A673 (cell line): ENCODE measurements at regions of chr4 and their contacts with region 1.

Region 1: GRCh38 chr4:73653695-73654106 is 33.5 kb upstream of the RASSF6 start:
- DNase-seq: peak; percentile 18
- H3K4me3 ChIP-seq: no peak overlapping the region
- H3K27ac ChIP-seq: no peak overlapping the region
- H3K4me1 ChIP-seq: no peaks in the 10 kb centered on the region
- H3K27me3 ChIP-seq: no peaks in the 10 kb centered on the region
- CTCF ChIP-seq: peak; percentile 41; the same call in 1 of the 2 replicates

Region 2: GRCh38 chr4:73311428-73311827 is 342.3 kb before region 1 on chr4:
- CTCF ChIA-PET with region 1: no interaction called
- POLR2A ChIA-PET with region 1: no interaction called
- intact Hi-C with region 1: loop called (anchors 10 kb)
- DNase-seq: peak; percentile 11
- H3K4me3 ChIP-seq: no peak overlapping the region
- H3K27ac ChIP-seq: no peak overlapping the region
- H3K4me1 ChIP-seq: no peaks in the 10 kb centered on the region
- H3K27me3 ChIP-seq: no peaks in the 10 kb centered on the region
- CTCF ChIP-seq: peak; percentile 43; the same call in 1 of the 2 replicates

Region 3: GRCh38 chr4:73341454-73341853 is 312.2 kb before region 1 on chr4:
- CTCF ChIA-PET with region 1: no interaction called
- POLR2A ChIA-PET with region 1: no interaction called
- intact Hi-C with region 1: loop called (anchors 5 kb)
- DNase-seq: peak; percentile 28
- H3K4me3 ChIP-seq: no peak overlapping the region
- H3K27ac ChIP-seq: no peak overlapping the region
- H3K4me1 ChIP-seq: no peaks in the 10 kb centered on the region
- H3K27me3 ChIP-seq: no peaks in the 10 kb centered on the region
- CTCF ChIP-seq: peak; percentile 49

Region 4: DNA sequence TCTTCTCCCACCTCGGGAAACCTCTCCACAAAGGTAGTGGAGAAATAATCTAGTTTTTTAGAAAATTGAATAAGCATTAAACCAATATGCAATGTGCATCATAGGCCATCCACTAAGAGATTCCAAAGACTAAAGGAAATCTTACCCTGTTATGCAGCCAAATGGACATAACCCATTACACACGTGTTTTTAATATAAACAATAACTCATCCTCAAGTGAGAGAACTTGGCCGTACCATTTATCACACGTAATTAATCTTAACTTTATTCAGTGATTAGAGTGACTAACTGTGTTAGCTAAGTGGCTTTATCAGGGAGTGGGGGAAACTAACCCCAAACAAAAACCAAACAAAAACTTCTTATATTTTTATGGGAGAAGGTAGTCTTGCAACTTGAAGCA is 114.3 kb before region 1 on chr4:
- CTCF ChIA-PET with region 1: no interaction called
- POLR2A ChIA-PET with region 1: no interaction called
- intact Hi-C with region 1: no loop called
- DNase-seq: no peak
- H3K4me3 ChIP-seq: no peak overlapping the region
- H3K27ac ChIP-seq: no peak overlapping the region
- H3K4me1 ChIP-seq: no peaks in the 10 kb centered on the region
- H3K27me3 ChIP-seq: no peaks in the 10 kb centered on the region
- CTCF ChIP-seq: no peak

Region 5: GRCh38 chr4:73573794-73574406 is 79.8 kb before region 1 on chr4:
- CTCF ChIA-PET with region 1: no interaction called
- POLR2A ChIA-PET with region 1: no interaction called
- intact Hi-C with region 1: loop called (anchors 1 kb)
- DNase-seq: peak; percentile 73
- H3K4me3 ChIP-seq: no peak overlapping the region
- H3K27ac ChIP-seq: no peak overlapping the region
- H3K4me1 ChIP-seq: no peaks in the 10 kb centered on the region
- H3K27me3 ChIP-seq: no peaks in the 10 kb centered on the region
- CTCF ChIP-seq: peak; percentile 68